CD8-positive, alpha-beta T cell (primary cell): ENCODE measurements at regions of chr6 and their contacts with region 1.

Region 1: GRCh38 chr6:73732845-73733675 is 37.1 kb downstream of the CD109 start:
- DNase-seq: peak; percentile 36 to 78 (median 62)
- ATAC-seq: peak; percentile 100
- H3K4me3 ChIP-seq: no peak overlapping the region
- H3K4me3 Mint-ChIP-seq: no peak overlapping the region
- H3K27ac ChIP-seq: no peak overlapping the region
- H3K27ac Mint-ChIP-seq: no peak overlapping the region
- H3K4me1 ChIP-seq: no peaks in the 10 kb centered on the region
- H3K4me1 Mint-ChIP-seq: no peaks in the 10 kb centered on the region
- H3K27me3 ChIP-seq: no peaks in the 10 kb centered on the region
- H3K27me3 Mint-ChIP-seq: no peaks in the 10 kb centered on the region
- CTCF ChIP-seq: peak; percentile 77

Region 2: GRCh38 chr6:73644941-73645591 is 88.0 kb before region 1 on chr6:
- CTCF ChIA-PET with region 1: no interaction called
- POLR2A ChIA-PET with region 1: no interaction called
- intact Hi-C with region 1: no loop called
- DNase-seq: peak in 1 of 9 experiments; percentile 6
- ATAC-seq: no peak
- H3K4me3 ChIP-seq: peak overlapping the region; percentile 13 to 20
- H3K4me3 Mint-ChIP-seq: peak overlapping the region; percentile 83
- H3K27ac ChIP-seq: no peak overlapping the region
- H3K27ac Mint-ChIP-seq: no peak overlapping the region
- H3K4me1 ChIP-seq: no peaks in the 10 kb centered on the region
- H3K4me1 Mint-ChIP-seq: peaks cover 15% of the 10 kb centered on the region
- H3K27me3 ChIP-seq: no peaks in the 10 kb centered on the region
- H3K27me3 Mint-ChIP-seq: no peaks in the 10 kb centered on the region
- CTCF ChIP-seq: no peak

Region 3: DNA sequence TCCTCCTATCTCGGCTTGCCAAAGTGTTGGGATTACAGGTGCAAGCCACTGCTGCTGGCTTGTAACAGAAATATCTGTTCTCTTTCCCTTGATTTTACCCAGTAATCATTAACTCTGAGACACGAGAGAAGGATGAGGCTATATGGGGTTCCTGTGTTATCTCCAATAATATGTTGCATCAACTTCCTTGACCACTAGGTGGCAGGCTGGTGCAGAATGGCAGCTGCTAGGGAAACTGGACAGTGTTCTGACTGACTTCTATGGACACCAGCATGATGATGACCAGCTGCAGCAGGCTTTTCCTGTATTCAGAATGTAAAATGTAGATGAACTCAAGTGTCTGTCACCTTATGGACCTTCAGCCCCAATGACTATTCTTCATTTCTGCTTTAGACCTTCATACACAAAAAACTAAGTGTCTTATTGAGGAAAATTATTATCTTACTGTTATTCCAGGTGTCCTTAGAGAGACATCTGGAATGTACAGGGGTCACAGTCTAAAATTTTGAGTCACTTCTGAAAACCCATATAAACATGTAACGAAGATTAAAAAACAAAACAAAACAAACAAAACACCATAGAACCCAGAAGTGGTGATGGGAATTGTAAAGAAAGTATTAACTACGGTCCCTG is 57.5 kb before region 1 on chr6:
- CTCF ChIA-PET with region 1: interaction called, 26 read pairs
- POLR2A ChIA-PET with region 1: no interaction called
- intact Hi-C with region 1: loop called (anchors 1 to 2 kb)
- DNase-seq: peak; percentile 45 to 73 (median 69)
- ATAC-seq: peak; percentile 75
- H3K4me3 ChIP-seq: no peak overlapping the region
- H3K4me3 Mint-ChIP-seq: no peak overlapping the region
- H3K27ac ChIP-seq: no peak overlapping the region
- H3K27ac Mint-ChIP-seq: no peak overlapping the region
- H3K4me1 ChIP-seq: no peaks in the 10 kb centered on the region
- H3K4me1 Mint-ChIP-seq: no peaks in the 10 kb centered on the region
- H3K27me3 ChIP-seq: peaks cover 0 to 2% of the 10 kb centered on the region in 2 experiments
- H3K27me3 Mint-ChIP-seq: peaks cover 22% of the 10 kb centered on the region
- CTCF ChIP-seq: peak; percentile 90

Region 4: GRCh38 chr6:73713410-73714147 is 19.5 kb before region 1 on chr6:
- CTCF ChIA-PET with region 1: interaction called, 15 read pairs
- POLR2A ChIA-PET with region 1: no interaction called
- intact Hi-C with region 1: no loop called
- DNase-seq: no peak
- ATAC-seq: no peak
- H3K4me3 ChIP-seq: no peak overlapping the region
- H3K4me3 Mint-ChIP-seq: no peak overlapping the region
- H3K27ac ChIP-seq: no peak overlapping the region
- H3K27ac Mint-ChIP-seq: peak overlapping the region; percentile 58
- H3K4me1 ChIP-seq: peaks cover 5% of the 10 kb centered on the region
- H3K4me1 Mint-ChIP-seq: peaks cover 8% of the 10 kb centered on the region
- H3K27me3 ChIP-seq: no peaks in the 10 kb centered on the region
- H3K27me3 Mint-ChIP-seq: no peaks in the 10 kb centered on the region
- CTCF ChIP-seq: no peak

Region 5: DNA sequence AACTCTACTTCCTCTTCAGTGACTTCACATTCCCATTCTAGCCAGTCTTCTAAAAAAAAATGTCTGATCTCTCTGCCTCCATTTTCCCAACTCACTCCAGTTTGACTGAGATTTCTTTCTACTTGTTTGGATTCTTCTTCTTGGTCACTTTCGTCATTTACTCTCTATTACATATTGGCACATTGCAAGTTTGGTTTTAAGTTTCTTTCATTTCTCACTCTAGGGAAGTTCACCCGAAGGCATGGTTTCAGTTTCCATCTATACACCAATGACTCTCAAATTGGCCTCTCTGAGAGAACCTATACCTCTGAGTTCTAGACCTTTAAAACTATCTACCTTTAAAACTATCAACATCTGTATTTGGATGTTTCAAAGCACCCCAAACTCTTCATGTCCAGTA is 14.2 kb after region 1 on chr6:
- CTCF ChIA-PET with region 1: interaction called, 11 read pairs
- POLR2A ChIA-PET with region 1: no interaction called
- intact Hi-C with region 1: no loop called
- DNase-seq: peak in 2 of 9 experiments; percentile 9 to 20
- ATAC-seq: no peak
- H3K4me3 ChIP-seq: peak overlapping the region in 1 of 2 experiments; percentile 14
- H3K4me3 Mint-ChIP-seq: no peak overlapping the region
- H3K27ac ChIP-seq: no peak overlapping the region
- H3K27ac Mint-ChIP-seq: no peak overlapping the region
- H3K4me1 ChIP-seq: no peaks in the 10 kb centered on the region
- H3K4me1 Mint-ChIP-seq: no peaks in the 10 kb centered on the region
- H3K27me3 ChIP-seq: no peaks in the 10 kb centered on the region
- H3K27me3 Mint-ChIP-seq: no peaks in the 10 kb centered on the region
- CTCF ChIP-seq: no peak